Spleen (tissue), 13 donors: ENCODE measurements at regions of chr5 and their contacts with region 1.

Region 1: DNA sequence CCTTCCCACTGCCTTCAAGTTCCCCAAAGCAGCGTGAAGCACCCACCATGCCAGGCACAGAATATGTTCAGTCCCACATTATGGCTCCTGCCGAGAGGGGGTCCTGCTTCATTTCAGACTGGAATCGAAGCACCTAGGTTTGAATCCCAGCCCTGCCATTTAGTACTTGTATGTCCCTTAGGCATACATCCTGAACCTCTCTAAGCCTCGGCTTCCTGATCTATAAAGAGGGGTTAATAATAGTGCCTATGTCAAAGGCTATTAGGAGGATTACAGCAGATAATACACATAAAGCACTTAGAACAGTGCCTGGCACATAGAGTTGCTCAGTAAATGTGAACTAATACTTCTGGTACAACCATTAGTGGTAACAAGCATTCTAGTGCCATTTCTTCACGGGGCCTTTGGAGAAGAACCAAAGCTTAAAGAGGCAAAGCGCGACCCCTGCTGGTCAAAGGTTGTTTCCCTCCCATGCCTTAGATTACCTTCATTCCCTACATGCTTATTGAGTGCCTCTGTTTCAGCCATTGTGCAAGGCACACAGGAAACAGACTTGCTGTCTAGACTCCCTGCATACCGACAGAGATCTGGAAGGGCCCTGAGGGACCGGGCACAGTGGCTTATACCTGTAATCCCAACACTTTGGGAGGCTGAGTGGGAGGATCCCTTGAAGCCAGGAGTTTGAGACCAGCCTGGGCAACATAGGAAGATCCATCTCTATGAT is 98.2 kb downstream of the PPARGC1B start:
- DNase-seq: peak; percentile 91
- H3K4me3 ChIP-seq: no peak overlapping the region
- H3K27ac ChIP-seq: no peak overlapping the region
- H3K4me1 ChIP-seq: peaks cover 0 to 8% (median 2%) of the 10 kb centered on the region in 6 donors
- H3K27me3 ChIP-seq: no peaks in the 10 kb centered on the region
- CTCF ChIP-seq: peak; percentile 83 to 94 (median 89)
- POLR2A ChIP-seq: no peak

Region 2: DNA sequence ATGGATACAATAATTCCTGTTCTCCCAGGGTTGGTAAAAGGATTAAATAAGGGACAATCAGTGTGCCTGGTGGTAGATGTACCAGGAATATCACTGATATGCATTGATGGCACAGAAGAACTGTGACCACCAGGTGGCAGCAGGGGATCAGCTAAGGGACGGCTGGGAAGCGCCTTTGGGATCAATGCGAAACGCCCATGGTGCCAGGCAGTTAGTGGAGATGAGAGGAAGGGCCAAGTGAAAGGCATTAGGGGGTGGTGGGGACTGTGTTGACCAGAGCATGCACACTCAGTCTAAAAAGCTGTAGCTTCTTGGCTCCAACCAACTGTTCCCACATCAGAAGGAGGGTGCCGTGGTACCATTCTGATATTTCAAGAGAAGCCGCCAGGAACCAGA is 191.5 kb before region 1 on chr5:
- intact Hi-C with region 1: loop called (anchors 2 kb)
- DNase-seq: no peak
- H3K4me3 ChIP-seq: no peak overlapping the region
- H3K27ac ChIP-seq: no peak overlapping the region
- H3K4me1 ChIP-seq: peaks cover 0 to 10% (median 0%) of the 10 kb centered on the region in 6 donors
- H3K27me3 ChIP-seq: no peaks in the 10 kb centered on the region
- CTCF ChIP-seq: peak; percentile 68 to 93 (median 84)
- POLR2A ChIP-seq: no peak